Breast epithelium (tissue), 4 donors: ENCODE measurements at regions of chr4 and their contacts with region 1.

Region 1: DNA sequence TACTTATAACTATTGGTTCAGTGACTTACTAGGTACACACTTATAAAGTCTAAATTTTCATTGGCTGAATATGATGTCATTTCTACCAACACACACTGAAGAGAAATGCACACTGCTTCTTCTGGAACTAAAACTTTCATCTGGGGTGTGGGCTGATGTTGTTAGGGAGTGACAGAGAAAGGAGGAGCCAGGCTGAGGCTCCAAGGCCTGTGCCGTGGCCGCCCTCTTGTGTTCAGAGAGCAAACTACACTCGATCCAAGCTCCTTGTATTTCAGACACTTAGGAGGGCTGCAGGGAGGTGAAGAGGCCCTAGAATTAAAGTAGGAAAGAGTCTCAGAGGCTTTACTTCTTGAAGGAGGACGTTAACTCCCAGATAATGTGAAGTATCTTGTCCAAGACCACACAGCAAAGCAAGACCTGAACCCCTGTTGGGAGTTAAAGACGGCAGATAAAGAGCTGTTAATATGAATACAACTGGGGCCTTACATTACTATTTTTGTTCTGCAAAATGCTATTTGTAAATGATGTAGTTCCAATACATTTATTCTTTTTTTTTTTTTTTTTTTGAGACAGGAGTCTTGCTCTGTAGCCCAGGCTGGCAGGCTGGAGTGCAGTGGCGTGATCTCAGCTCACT is 137.5 kb downstream of the AFAP1 start:
- DNase-seq: peak; percentile 74 to 77
- H3K4me3 ChIP-seq: no peak overlapping the region
- H3K27ac ChIP-seq: no peak overlapping the region
- H3K4me1 ChIP-seq: peaks cover 0 to 22% of the 10 kb centered on the region in 2 donors
- H3K27me3 ChIP-seq: no peaks in the 10 kb centered on the region
- CTCF ChIP-seq: peak; percentile 43 to 89 (median 85)
- POLR2A ChIP-seq: no peak

Region 2: GRCh38 chr4:7070729-7071511 is 731.3 kb before region 1 on chr4:
- intact Hi-C with region 1: loop called (anchors 10 kb)
- DNase-seq: peak; percentile 83 to 91
- H3K4me3 ChIP-seq: no peak overlapping the region
- H3K27ac ChIP-seq: no peak overlapping the region
- H3K4me1 ChIP-seq: peaks cover 0 to 11% of the 10 kb centered on the region in 2 donors
- H3K27me3 ChIP-seq: no peaks in the 10 kb centered on the region
- CTCF ChIP-seq: peak; percentile 96 to 99 (median 98)
- POLR2A ChIP-seq: no peak

Region 3: GRCh38 chr4:7827991-7828720 is 25.9 kb after region 1 on chr4:
- intact Hi-C with region 1: loop called (anchors 2 kb)
- DNase-seq: peak in 1 of 2 donors; percentile 89
- H3K4me3 ChIP-seq: peak overlapping the region in 2 of 3 donors; percentile 27 to 60
- H3K27ac ChIP-seq: peak overlapping the region; percentile 88 to 92
- H3K4me1 ChIP-seq: peaks cover 5 to 7% of the 10 kb centered on the region in 2 donors
- H3K27me3 ChIP-seq: no peaks in the 10 kb centered on the region
- CTCF ChIP-seq: no peak
- POLR2A ChIP-seq: no peak

Region 4: DNA sequence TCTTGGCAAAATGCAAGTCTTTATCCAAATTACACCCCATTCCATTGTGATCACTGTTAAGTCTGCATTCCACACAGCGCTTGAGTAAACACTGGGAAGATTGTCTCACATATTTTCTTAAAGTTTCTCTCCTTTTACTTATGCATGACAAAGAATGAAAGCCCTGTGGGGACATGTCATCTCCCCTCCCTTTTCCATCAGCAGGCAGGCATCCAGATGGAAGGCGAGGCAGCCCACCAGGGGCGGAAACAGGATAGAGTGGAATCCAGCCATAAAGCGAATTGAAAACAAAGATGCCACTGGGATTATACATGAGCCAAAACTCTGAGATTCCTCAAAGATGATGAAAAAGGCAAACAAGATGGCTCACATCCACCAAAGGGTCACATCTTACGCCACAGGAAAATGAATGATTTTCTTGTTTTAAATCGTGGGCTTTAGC is 59.3 kb after region 1 on chr4:
- intact Hi-C with region 1: no loop called
- DNase-seq: no peak
- H3K4me3 ChIP-seq: no peak overlapping the region
- H3K27ac ChIP-seq: no peak overlapping the region
- H3K4me1 ChIP-seq: no peaks in the 10 kb centered on the region
- H3K27me3 ChIP-seq: no peaks in the 10 kb centered on the region
- CTCF ChIP-seq: no peak
- POLR2A ChIP-seq: no peak